Common myeloid progenitor, CD34-positive (primary cell): ENCODE measurements at regions of chr4 and their contacts with region 1.

Region 1: GRCh38 chr4:140861359-140862176 is 105.4 kb upstream of the TBC1D9 start:
- DNase-seq: peak; percentile 87 to 94 (median 91)
- H3K4me3 ChIP-seq: no peak overlapping the region
- H3K27ac ChIP-seq: no peak overlapping the region
- H3K4me1 ChIP-seq: peaks cover 0 to 3% (median 0%) of the 10 kb centered on the region in 4 experiments
- H3K27me3 ChIP-seq: no peaks in the 10 kb centered on the region

Region 2: GRCh38 chr4:141133146-141133998 is 271.8 kb after region 1 on chr4 and contains the start of gene RNF150:
- CTCF ChIA-PET with region 1: interaction called, 25 read pairs
- POLR2A ChIA-PET with region 1: no interaction called
- DNase-seq: peak; percentile 93 to 95 (median 95)
- H3K4me3 ChIP-seq: peak within 1 kb of the TSS; percentile 63 to 96 (median 79)
- H3K27ac ChIP-seq: no peak within 1 kb of the TSS
- H3K4me1 ChIP-seq: peaks cover 6 to 31% (median 25%) of the 10 kb centered on the region in 4 experiments
- H3K27me3 ChIP-seq: peaks cover 0 to 6% (median 0%) of the 10 kb centered on the region in 5 experiments